IMR-90 (cell line): ENCODE measurements at regions of chr13 and their contacts with region 1.

Region 1: GRCh38 chr13:77345150-77345780 is 18.4 kb upstream of the MYCBP2 start:
- DNase-seq: no peak
- ATAC-seq: no peak
- H3K4me3 ChIP-seq: no peak overlapping the region
- H3K27ac ChIP-seq: no peak overlapping the region
- H3K4me1 ChIP-seq: no peaks in the 10 kb centered on the region
- H3K27me3 ChIP-seq: peaks cover 8% of the 10 kb centered on the region
- CTCF ChIP-seq: no peak
- POLR2A ChIP-seq: no peak
- RAD21 ChIP-seq: no peak

Region 2: GRCh38 chr13:77372275-77372674 is 27.0 kb after region 1 on chr13:
- CTCF ChIA-PET with region 1: no interaction called
- POLR2A ChIA-PET with region 1: interaction called, 13 read pairs
- dilution Hi-C with region 1: no loop called
- in situ Hi-C with region 1: no loop called
- intact Hi-C with region 1: no loop called
- DNase-seq: no peak
- ATAC-seq: no peak
- H3K4me3 ChIP-seq: no peak overlapping the region
- H3K27ac ChIP-seq: no peak overlapping the region
- H3K4me1 ChIP-seq: no peaks in the 10 kb centered on the region
- H3K27me3 ChIP-seq: no peaks in the 10 kb centered on the region; the same call in 1 of the 2 replicates
- CTCF ChIP-seq: no peak
- POLR2A ChIP-seq: no peak
- RAD21 ChIP-seq: no peak

Region 3: DNA sequence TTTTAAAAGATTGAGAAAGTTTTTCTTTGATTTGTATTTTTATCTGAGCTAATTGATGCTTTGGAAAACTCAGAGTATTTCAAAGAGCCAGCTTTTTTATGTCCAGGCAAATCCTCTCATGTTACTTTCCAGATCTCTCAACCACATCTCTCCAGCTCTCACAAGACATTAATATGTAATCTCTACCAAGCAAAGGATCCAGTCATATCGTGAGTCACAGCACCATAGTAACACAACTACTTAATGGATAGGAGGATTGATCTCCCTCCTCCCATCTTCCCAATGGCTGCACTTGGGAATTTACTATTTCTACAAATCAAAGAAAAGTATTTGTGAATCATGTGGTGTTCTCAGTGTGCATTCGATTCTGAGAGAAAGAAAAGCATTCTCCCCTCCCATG is 1194.8 kb after region 1 on chr13:
- CTCF ChIA-PET with region 1: no interaction called
- POLR2A ChIA-PET with region 1: no interaction called
- dilution Hi-C with region 1: no loop called
- in situ Hi-C with region 1: no loop called
- intact Hi-C with region 1: no loop called
- DNase-seq: no peak
- ATAC-seq: no peak
- H3K4me3 ChIP-seq: no peak overlapping the region
- H3K27ac ChIP-seq: no peak overlapping the region
- H3K4me1 ChIP-seq: no peaks in the 10 kb centered on the region
- H3K27me3 ChIP-seq: no peaks in the 10 kb centered on the region
- CTCF ChIP-seq: no peak
- POLR2A ChIP-seq: no peak
- RAD21 ChIP-seq: no peak